ENCODE measurements at regions of chr19 and their contacts with region 1.

Region 1: GRCh38 chr19:2161688-2162053 is 2.1 kb upstream of the DOT1L start:
- DNase-seq: no peak
- H3K4me3 Mint-ChIP-seq: peak overlapping the region; percentile 23
- H3K27ac Mint-ChIP-seq: no peak overlapping the region
- H3K4me1 Mint-ChIP-seq: peaks cover 20% of the 10 kb centered on the region
- H3K27me3 Mint-ChIP-seq: peaks cover 2% of the 10 kb centered on the region

Region 2: GRCh38 chr19:2096480-2097329 is 65.0 kb before region 1 on chr19 and contains the start of gene IZUMO4:
- intact Hi-C with region 1: loop called (anchors 2 kb)
- DNase-seq: peak; percentile 100
- H3K4me3 Mint-ChIP-seq: peak within 1 kb of the TSS; percentile 90
- H3K27ac Mint-ChIP-seq: peak within 1 kb of the TSS; percentile 94
- H3K4me1 Mint-ChIP-seq: peaks cover 25% of the 10 kb centered on the region
- H3K27me3 Mint-ChIP-seq: no peaks in the 10 kb centered on the region
- total RNA-seq, gene IZUMO4: 9.5 and 10.0 TPM in 2 replicates